ENCODE measurements at regions of chr4 and their contacts with region 1.

Region 1: DNA sequence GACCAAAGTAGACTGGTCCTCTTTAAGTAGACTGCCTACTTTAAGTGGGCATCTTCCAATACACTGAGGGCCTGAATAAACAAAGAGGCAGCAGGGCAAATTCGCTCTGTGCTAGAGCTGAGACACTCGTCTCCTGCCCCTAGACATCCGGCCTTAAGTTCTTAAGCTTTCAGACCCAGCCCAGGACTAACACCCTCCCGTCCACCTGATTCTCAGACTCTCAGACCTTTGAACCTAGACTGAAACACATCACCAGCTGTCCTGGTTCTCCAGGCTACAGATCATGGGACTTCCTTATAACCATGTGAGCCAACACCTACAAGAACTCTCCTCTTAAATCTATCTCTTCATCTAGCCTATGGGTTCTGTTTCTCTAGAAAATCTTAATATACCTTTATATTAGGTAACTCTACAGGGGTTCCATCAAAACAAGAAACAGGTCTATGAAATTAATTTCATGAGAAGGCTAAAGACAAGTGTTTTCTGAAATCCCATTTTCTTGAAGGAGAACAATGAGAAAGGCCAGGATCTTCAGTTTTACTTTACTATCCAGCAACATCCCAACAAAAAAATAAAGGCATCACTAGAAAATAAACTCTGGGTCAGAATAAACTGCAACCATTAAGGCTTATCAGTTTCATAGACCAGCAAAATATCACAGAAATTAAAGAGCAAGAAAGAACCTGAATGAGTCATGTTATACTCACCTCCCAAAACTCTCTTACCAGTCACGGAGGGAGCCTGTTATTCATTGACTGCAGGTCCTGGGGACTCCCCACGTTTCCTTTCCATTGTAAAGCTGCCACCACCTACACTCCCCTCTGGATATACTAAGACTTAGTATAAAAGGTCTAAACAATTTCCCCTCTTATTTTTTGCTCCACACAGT is 14.8 kb downstream of the ADGRA3 start:
- DNase-seq: peak; percentile 72
- H3K4me3 Mint-ChIP-seq: no peak overlapping the region
- H3K27ac Mint-ChIP-seq: peak overlapping the region; percentile 72
- H3K4me1 Mint-ChIP-seq: peaks cover 24% of the 10 kb centered on the region
- H3K27me3 Mint-ChIP-seq: no peaks in the 10 kb centered on the region

Region 2: GRCh38 chr4:21888195-21888976 is 612.7 kb before region 1 on chr4:
- CTCF ChIA-PET with region 1: no interaction called
- intact Hi-C with region 1: loop called (anchors 5 kb)
- DNase-seq: no peak
- H3K4me3 Mint-ChIP-seq: no peak overlapping the region
- H3K27ac Mint-ChIP-seq: peak overlapping the region; percentile 51
- H3K4me1 Mint-ChIP-seq: peaks cover 7% of the 10 kb centered on the region
- H3K27me3 Mint-ChIP-seq: peaks cover 2% of the 10 kb centered on the region

Region 3: DNA sequence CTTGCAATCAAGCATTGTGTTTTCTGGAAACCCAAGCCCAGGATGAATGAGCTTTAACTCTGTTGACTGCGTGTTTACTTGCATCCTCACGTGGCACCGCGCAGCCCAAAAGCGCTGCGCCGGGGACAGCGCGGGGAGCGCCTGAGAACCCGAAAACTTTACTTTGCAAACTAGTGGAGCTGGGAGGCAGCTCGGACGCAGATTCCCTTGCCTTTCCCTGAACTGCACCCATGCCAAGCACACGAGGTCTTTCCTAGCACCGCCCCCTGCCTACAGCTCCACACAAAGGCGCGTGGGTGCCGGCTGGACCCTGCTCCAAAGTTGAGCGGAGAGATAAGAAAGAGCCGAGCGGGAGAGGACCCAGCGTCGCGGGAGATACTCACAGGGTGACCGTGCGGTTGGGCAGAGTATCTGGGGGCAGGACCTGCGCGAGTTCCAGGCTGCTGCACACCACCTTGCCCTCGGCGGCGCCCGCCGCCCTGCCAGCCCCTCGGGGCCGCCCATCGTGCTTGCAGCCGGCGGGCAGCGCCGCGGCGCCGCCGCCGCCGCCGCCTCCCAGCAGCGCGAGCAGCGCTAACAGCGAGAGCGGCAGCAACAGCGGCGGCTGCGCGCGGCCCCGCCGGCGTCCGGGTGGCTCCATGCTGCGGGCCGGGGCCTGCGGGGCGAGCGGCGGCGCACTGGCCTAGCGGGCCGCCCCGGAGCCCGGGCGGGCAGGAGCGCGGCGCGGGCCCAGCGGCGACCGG is 14.2 kb after region 1 on chr4:
- CTCF ChIA-PET with region 1: interaction called, 8 read pairs
- intact Hi-C with region 1: loop called (anchors 1 kb)
- DNase-seq: peak; percentile 34
- H3K4me3 Mint-ChIP-seq: peak overlapping the region; percentile 97
- H3K27ac Mint-ChIP-seq: peak overlapping the region; percentile 77
- H3K4me1 Mint-ChIP-seq: peaks cover 17% of the 10 kb centered on the region
- H3K27me3 Mint-ChIP-seq: peaks cover 9% of the 10 kb centered on the region

Region 4: DNA sequence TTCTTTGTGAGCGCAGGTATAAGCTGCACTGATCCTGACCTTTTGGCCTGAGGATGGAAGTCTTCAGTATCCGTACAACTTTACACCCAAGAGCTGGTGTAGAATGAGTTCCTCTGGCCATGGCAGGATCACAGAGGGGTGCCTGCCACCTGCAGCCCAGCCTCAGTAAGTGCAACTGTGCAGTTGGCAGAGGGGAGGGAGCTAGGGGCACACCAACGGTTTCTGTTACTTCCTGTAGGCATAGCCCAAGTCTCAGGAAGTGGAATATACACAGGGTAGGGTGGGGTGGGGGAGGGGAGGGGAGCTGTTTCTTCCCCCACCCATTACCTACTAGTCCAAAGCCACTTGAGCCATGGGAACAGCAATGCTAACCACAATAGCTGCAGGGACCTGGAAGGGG is 106.3 kb after region 1 on chr4:
- CTCF ChIA-PET with region 1: interaction called, 6 read pairs
- intact Hi-C with region 1: loop called (anchors 2 kb)
- DNase-seq: peak; percentile 77
- H3K4me3 Mint-ChIP-seq: no peak overlapping the region
- H3K27ac Mint-ChIP-seq: no peak overlapping the region
- H3K4me1 Mint-ChIP-seq: peaks cover 29% of the 10 kb centered on the region
- H3K27me3 Mint-ChIP-seq: no peaks in the 10 kb centered on the region